ENCODE measurements at regions of chr9 and their contacts with region 1.

Region 1: DNA sequence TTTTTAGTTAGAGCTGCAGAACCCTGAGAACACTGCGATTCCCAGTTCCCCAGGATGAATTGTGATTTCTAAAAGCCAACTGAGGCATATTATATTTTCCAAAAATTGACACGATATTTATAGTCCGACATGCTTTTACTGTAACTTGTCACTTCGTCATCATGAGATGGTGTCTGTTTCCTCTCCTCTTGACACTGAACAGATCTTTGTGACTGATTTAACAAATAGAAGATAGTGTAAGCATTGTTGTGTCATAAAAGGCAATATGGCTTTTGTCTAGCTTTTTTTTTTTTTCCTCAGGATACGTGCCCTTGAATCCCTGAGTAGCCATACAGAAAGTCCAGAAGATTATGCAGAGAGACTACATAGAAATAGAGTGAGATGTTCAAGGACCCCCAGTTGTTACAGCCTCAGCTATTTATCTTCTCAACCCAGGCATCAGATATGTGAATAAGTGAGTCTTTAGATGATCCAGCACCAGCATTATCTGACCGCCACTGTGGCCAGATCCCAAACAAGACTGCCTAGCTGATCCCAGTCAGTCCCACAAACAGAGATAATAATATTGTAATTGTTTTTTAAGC is 27.8 kb upstream of the CCL21 start:
- DNase-seq: no peak

Region 2: DNA sequence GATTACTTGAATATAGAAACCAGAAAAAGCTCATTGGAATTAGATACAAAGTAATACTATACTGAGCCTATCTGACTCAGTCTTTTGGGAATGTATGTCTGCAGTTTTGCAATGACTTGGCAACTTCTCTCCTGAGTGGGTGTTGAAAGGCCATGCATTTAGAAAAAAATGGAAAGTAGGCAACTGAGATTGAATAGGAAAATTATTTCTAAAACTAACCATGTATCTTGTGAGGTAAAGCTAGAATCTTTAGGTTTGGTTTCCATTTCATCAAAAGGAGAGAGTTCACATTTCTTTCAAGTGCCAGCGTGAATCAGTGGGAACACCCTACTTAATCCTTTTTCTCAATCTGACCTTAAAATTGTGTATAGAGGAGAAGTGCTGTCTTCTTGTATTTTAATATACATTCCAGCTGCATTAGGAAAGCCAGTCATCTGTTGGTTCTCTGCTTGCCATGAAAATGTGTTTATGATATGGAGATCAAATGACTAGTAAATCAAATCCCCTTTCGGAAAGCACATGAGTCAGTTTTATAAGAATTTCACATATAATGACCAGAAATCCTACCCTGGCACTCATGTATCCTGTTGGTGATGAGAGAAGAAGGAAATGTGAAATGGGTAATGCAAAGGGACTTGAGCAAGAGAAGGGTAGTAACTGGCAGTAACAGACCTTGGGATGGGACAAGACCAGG is 1417.1 kb before region 1 on chr9:
- intact Hi-C with region 1: loop called in 1 of 2 experiments (anchors 10 kb)
- DNase-seq: no peak